ENCODE measurements at regions of chr13 and their contacts with region 1.

Region 1: GRCh38 chr13:49976314-49977258 is 20.3 kb upstream of the TRIM13 start:
- DNase-seq: peak; percentile 63
- H3K4me3 ChIP-seq: no peak overlapping the region
- H3K27ac ChIP-seq: peak overlapping the region in 1 of 2 donors; percentile 38
- H3K4me1 ChIP-seq: no peaks in the 10 kb centered on the region
- H3K27me3 ChIP-seq: no peaks in the 10 kb centered on the region
- CTCF ChIP-seq: peak; percentile 65 to 91 (median 85)
- POLR2A ChIP-seq: no peak

Region 2: GRCh38 chr13:49585220-49586157 is 391.1 kb before region 1 on chr13 and contains the start of gene RCBTB1:
- intact Hi-C with region 1: no loop called
- DNase-seq: peak; percentile 74
- H3K4me3 ChIP-seq: peak within 1 kb of the TSS; percentile 89 to 90
- H3K27ac ChIP-seq: peak within 1 kb of the TSS; percentile 76 to 83
- H3K4me1 ChIP-seq: no peaks in the 10 kb centered on the region
- H3K27me3 ChIP-seq: no peaks in the 10 kb centered on the region
- CTCF ChIP-seq: no peak
- POLR2A ChIP-seq: peak; percentile 16
- total RNA-seq, gene RCBTB1: 15.7 to 29.4 TPM

Region 3: GRCh38 chr13:49925881-49926418 is 50.6 kb before region 1 on chr13:
- intact Hi-C with region 1: no loop called
- DNase-seq: no peak
- H3K4me3 ChIP-seq: no peak overlapping the region
- H3K27ac ChIP-seq: peak overlapping the region in 1 of 2 donors; percentile 41
- H3K4me1 ChIP-seq: no peaks in the 10 kb centered on the region
- H3K27me3 ChIP-seq: no peaks in the 10 kb centered on the region
- CTCF ChIP-seq: no peak
- POLR2A ChIP-seq: no peak

Region 4: DNA sequence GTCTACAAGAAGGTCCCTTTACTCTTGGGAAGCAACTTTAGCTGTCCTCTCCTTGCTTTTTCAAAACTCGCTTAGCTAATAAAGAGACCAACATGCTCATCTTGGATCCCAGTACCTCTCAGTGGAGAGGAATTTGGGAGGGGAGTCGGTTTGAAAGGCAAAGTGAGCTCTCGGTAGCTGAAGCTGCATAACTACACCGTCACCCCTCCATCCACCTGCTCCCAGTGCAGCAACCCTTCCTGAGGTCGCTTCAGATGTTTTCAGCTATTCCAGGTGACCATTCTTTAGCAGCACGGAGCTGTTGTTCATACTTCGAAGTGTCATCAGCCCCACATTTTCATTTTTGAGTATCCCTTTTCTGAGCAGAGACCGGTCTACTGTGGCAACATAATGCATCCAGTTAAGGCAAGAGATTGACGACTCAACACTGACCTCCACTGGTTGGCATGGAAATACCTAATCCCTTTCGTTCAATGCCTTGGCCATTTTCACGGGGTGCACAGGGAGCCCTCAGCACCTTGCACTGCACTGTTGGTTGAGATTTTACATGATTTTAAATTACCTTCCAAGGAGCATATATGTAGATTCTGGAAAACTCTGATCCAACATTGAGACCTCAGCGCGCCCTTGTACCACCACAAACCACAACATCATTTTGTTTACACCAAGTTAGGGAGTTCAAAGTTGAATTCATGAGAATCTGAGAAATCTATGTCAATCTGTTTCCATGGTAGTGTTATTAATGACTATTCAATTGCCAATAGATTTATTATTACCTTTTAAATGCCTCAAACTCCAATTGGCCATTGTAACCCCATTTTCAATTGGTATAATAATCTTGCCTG is 824.7 kb after region 1 on chr13:
- intact Hi-C with region 1: no loop called
- DNase-seq: peak; percentile 44
- H3K4me3 ChIP-seq: no peak overlapping the region
- H3K27ac ChIP-seq: no peak overlapping the region
- H3K4me1 ChIP-seq: no peaks in the 10 kb centered on the region
- H3K27me3 ChIP-seq: no peaks in the 10 kb centered on the region
- CTCF ChIP-seq: peak in 3 of 4 experiments; percentile 50 to 71 (median 64)
- POLR2A ChIP-seq: no peak

Region 5: DNA sequence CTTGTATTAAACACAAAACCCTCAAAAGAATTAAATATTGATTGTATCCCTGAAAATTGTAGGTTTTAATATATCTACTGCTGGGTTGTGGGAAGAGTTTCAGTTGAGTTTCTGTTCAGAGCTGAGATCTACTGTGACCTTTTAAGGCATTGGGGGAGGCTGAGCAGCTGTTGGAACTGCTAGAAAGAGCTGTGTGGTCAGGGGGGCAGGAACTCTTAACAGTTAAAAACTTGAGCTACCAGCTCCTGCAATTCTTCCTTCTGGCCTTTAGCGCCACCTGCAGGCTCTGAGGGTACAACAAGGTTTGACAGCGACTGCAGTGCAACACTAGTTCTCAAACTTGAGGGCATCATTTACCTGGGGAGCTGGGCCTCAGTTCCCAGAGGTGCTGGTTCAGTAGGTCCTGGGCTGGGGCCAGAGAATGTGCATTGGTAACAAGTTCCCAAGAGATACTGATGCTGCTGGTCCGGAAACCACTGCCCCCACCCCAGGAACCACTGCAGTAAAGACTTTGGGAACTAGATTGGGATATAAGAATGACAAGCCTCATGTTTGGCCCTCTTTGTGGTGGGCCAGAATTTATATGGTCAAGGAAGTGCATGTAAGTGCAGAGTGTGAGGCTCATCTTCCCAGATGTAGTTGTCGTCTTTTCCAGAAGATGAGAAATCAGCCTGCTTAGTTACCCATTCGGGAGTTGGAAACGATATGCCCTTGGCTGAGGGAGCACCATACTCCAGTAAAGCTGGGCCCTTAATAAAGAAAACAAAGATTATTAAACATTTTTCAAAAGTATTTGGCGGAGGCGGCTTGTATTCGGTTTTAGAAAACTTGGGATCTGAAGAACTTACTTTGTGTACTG is 935.6 kb after region 1 on chr13:
- intact Hi-C with region 1: loop called (anchors 5 kb)
- DNase-seq: peak; percentile 78
- H3K4me3 ChIP-seq: no peak overlapping the region
- H3K27ac ChIP-seq: peak overlapping the region in 1 of 2 donors; percentile 9
- H3K4me1 ChIP-seq: no peaks in the 10 kb centered on the region
- H3K27me3 ChIP-seq: no peaks in the 10 kb centered on the region
- CTCF ChIP-seq: peak; percentile 71 to 86 (median 82)
- POLR2A ChIP-seq: no peak

Region 6: GRCh38 chr13:51070005-51070649 is 1093.5 kb after region 1 on chr13:
- intact Hi-C with region 1: loop called (anchors 10 kb)
- DNase-seq: peak; percentile 82
- H3K4me3 ChIP-seq: no peak overlapping the region
- H3K27ac ChIP-seq: no peak overlapping the region
- H3K4me1 ChIP-seq: no peaks in the 10 kb centered on the region
- H3K27me3 ChIP-seq: no peaks in the 10 kb centered on the region
- CTCF ChIP-seq: peak; percentile 79 to 94 (median 88)
- POLR2A ChIP-seq: no peak

Measured in prostate gland (tissue), 2 donors.